Activated CD4-positive, alpha-beta T cell treated with anti-CD3 and anti-CD28 coated beads for 36 hours (primary cell): ENCODE measurements at regions of chr3 and their contacts with region 1.

Region 1: GRCh38 chr3:158727206-158728060 is 4.8 kb downstream of the RARRES1 start:
- DNase-seq: peak; percentile 63
- ATAC-seq: no peak
- H3K4me3 Mint-ChIP-seq: no peak overlapping the region
- H3K27ac Mint-ChIP-seq: no peak overlapping the region
- H3K4me1 Mint-ChIP-seq: peaks cover 29% of the 10 kb centered on the region
- H3K27me3 Mint-ChIP-seq: peaks cover 3% of the 10 kb centered on the region

Region 2: DNA sequence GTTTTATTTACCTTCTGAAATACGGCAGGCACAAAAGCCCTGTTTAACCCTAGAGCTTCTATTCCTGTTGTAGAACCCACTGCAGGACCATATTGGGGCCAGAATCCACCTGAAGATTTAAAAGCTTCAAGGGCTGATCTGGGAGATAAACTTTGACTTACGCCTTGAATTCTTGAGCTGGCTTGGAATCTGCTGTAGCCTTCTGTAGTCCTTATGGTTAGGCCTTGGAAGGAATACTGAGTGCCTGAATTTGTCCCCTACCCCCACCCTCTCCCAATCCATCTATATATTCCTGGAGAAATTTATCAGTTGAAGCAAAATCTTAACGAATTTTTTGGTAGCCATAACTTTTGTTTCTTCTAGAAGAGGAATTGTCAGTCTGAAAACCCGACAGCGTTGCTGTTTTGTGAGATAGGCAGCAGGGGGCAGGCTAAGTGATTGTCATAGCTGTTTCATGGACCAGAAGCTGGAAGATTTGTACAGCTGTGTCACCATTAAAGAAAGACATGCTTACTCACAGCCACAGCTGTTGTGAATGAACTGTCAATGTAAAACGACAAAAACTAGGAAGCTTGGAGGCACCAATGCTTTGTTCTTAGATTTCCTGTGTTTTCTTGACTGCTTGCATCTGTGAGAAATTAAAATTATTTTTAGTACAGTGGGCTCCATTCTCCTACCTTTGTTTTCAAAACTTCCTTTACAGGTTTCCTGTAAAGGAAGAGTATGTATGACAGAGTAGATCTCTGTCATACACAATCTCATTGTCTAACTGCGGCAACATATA is 67.8 kb before region 1 on chr3:
- CTCF ChIA-PET with region 1: interaction called, 19 read pairs
- POLR2A ChIA-PET with region 1: interaction called, 4 read pairs
- intact Hi-C with region 1: no loop called
- DNase-seq: peak; percentile 76
- ATAC-seq: peak; percentile 97
- H3K4me3 Mint-ChIP-seq: no peak overlapping the region
- H3K27ac Mint-ChIP-seq: no peak overlapping the region
- H3K4me1 Mint-ChIP-seq: peaks cover 11% of the 10 kb centered on the region
- H3K27me3 Mint-ChIP-seq: no peaks in the 10 kb centered on the region

Region 3: DNA sequence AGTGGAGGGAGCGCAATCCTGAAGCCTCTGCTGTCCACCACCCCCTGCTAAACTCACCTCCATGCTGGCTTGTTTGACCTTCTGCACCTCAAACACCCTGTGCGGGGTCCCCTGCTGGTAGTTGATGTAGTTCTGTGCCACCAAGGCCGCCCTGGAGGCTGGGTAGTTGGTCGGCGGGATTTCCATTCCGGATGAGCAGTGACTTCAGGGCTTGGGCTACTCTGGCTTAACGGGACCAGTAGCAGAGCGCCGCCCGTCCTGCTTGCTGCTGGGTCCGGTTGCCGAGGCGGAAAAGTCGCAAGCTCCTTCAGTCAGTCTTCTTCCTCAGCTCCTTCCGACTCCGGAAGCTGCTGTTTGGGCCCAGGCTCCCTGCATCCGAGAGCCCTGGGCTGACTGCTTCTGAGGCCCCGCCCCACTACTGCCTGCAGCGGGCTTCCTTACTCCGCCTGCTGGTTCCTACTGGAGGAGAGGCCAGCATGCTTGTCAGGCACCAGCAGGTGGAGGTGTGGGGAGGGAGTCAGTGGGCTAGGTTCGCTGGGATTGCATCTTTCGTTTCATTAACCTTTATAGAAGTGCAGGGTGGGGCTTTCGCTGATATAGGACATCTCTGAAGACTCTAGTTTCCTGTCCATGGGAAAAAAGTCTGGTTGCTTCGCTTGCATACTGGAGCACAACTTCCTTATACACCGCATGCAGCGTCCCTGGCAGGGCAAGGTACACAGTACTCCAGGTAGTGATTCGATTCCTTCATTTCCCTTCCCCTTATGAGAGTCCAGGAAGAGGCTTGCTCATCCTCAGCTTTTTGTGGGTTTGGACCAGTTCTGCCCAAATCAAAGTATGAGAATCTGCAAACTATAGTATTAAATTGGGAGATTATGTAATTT is 54.9 kb before region 1 on chr3 and contains the start of gene LXN:
- CTCF ChIA-PET with region 1: interaction called, 5 read pairs
- POLR2A ChIA-PET with region 1: no interaction called
- intact Hi-C with region 1: loop called in 1 of 2 experiments (anchors 2 kb)
- DNase-seq: peak; percentile 92
- ATAC-seq: peak; percentile 100
- H3K4me3 Mint-ChIP-seq: peak within 1 kb of the TSS; percentile 85
- H3K27ac Mint-ChIP-seq: peak within 1 kb of the TSS; percentile 91
- H3K4me1 Mint-ChIP-seq: peaks cover 18% of the 10 kb centered on the region
- H3K27me3 Mint-ChIP-seq: no peaks in the 10 kb centered on the region
- total RNA-seq, gene LXN: 12.5 to 13.9 TPM

Region 4: GRCh38 chr3:158702815-158703481 is 24.5 kb before region 1 on chr3:
- CTCF ChIA-PET with region 1: interaction called, 10 read pairs
- POLR2A ChIA-PET with region 1: no interaction called
- intact Hi-C with region 1: no loop called
- DNase-seq: no peak
- ATAC-seq: no peak
- H3K4me3 Mint-ChIP-seq: no peak overlapping the region
- H3K27ac Mint-ChIP-seq: no peak overlapping the region
- H3K4me1 Mint-ChIP-seq: peaks cover 2% of the 10 kb centered on the region
- H3K27me3 Mint-ChIP-seq: no peaks in the 10 kb centered on the region

Region 5: GRCh38 chr3:158742871-158743663 is 15.6 kb after region 1 on chr3:
- CTCF ChIA-PET with region 1: interaction called, 28 read pairs
- POLR2A ChIA-PET with region 1: no interaction called
- intact Hi-C with region 1: no loop called
- DNase-seq: no peak
- ATAC-seq: no peak
- H3K4me3 Mint-ChIP-seq: no peak overlapping the region
- H3K27ac Mint-ChIP-seq: no peak overlapping the region
- H3K4me1 Mint-ChIP-seq: peaks cover 14% of the 10 kb centered on the region
- H3K27me3 Mint-ChIP-seq: no peaks in the 10 kb centered on the region

Region 6: GRCh38 chr3:158801696-158802408 is 74.4 kb after region 1 on chr3 and contains the start of gene MFSD1:
- CTCF ChIA-PET with region 1: interaction called, 18 read pairs
- POLR2A ChIA-PET with region 1: interaction called, 4 read pairs
- intact Hi-C with region 1: no loop called
- DNase-seq: peak; percentile 94
- ATAC-seq: peak; percentile 92
- H3K4me3 Mint-ChIP-seq: peak within 1 kb of the TSS; percentile 81
- H3K27ac Mint-ChIP-seq: peak within 1 kb of the TSS; percentile 87
- H3K4me1 Mint-ChIP-seq: peaks cover 22% of the 10 kb centered on the region
- H3K27me3 Mint-ChIP-seq: no peaks in the 10 kb centered on the region
- total RNA-seq, gene MFSD1: 6.9 to 13.1 TPM

Region 7: GRCh38 chr3:159260049-159260662 is 532.7 kb after region 1 on chr3:
- CTCF ChIA-PET with region 1: interaction called, 5 read pairs
- POLR2A ChIA-PET with region 1: no interaction called
- intact Hi-C with region 1: loop called in 1 of 2 experiments (anchors 2 kb)
- DNase-seq: peak; percentile 56
- ATAC-seq: no peak
- H3K4me3 Mint-ChIP-seq: no peak overlapping the region
- H3K27ac Mint-ChIP-seq: no peak overlapping the region
- H3K4me1 Mint-ChIP-seq: no peaks in the 10 kb centered on the region
- H3K27me3 Mint-ChIP-seq: peaks cover 3% of the 10 kb centered on the region

Region 8: GRCh38 chr3:159488602-159489001 is 761.2 kb after region 1 on chr3:
- CTCF ChIA-PET with region 1: no interaction called
- POLR2A ChIA-PET with region 1: no interaction called
- intact Hi-C with region 1: no loop called
- DNase-seq: no peak
- ATAC-seq: no peak
- H3K4me3 Mint-ChIP-seq: no peak overlapping the region
- H3K27ac Mint-ChIP-seq: no peak overlapping the region
- H3K4me1 Mint-ChIP-seq: no peaks in the 10 kb centered on the region
- H3K27me3 Mint-ChIP-seq: no peaks in the 10 kb centered on the region